Psoas muscle (tissue), 8 donors: ENCODE measurements at regions of chr1 and their contacts with region 1.

Region 1: GRCh38 chr1:147647796-147648633 is 22.3 kb downstream of the ACP6 start:
- DNase-seq: no peak
- ATAC-seq: no peak
- H3K4me3 ChIP-seq: no peak overlapping the region
- H3K27ac ChIP-seq: no peak overlapping the region
- H3K4me1 ChIP-seq: peaks cover under 1% of the 10 kb centered on the region
- H3K27me3 ChIP-seq: no peaks in the 10 kb centered on the region
- CTCF ChIP-seq: no peak

Region 2: DNA sequence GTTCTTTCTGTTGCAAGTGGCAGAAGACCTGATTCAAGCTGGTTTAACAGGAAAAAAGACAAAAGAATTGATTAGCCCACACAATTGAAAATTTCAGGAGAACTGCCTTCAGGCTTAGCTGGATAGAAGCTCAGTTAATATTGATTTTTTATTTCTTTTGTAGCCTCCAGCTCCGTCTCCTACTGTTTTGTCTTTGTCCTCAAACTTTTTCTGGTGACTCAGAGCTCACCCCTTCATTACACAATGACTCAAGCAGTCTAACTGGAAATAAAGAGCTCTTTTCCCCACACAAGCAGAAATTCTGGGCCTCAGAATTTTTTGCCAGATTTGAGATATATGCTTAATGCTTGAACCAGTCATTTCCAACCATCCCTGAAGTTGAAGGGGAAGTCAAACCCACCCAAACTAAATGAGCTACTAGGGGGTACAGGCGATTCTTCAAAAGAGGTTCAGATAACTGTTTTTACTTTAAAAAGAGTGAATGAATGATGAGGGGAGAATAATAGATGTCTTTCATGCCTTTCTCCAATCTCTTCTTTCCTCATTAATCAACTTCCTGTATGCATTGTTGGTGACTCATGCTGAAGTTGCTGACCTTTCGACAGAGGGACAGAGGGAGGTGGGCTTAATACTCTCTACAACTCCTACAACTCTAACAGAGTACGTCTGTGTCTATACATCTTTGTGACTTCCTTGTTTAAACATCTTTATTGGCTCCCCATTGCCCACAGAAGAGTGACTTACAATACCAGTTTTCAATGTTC is 28.5 kb after region 1 on chr1:
- intact Hi-C with region 1: loop called in 1 of 2 experiments (anchors 2 kb)
- DNase-seq: no peak
- ATAC-seq: no peak
- H3K4me3 ChIP-seq: no peak overlapping the region
- H3K27ac ChIP-seq: no peak overlapping the region
- H3K4me1 ChIP-seq: no peaks in the 10 kb centered on the region
- H3K27me3 ChIP-seq: peaks cover 0 to 4% (median 2%) of the 10 kb centered on the region in 3 donors
- CTCF ChIP-seq: no peak

Region 3: GRCh38 chr1:147771231-147772125 is 123.5 kb after region 1 on chr1:
- intact Hi-C with region 1: no loop called
- DNase-seq: peak; percentile 32 to 77
- ATAC-seq: peak; percentile 71 to 97 (median 90)
- H3K4me3 ChIP-seq: peak overlapping the region; percentile 49
- H3K27ac ChIP-seq: no peak overlapping the region
- H3K4me1 ChIP-seq: no peaks in the 10 kb centered on the region
- H3K27me3 ChIP-seq: no peaks in the 10 kb centered on the region
- CTCF ChIP-seq: no peak